Naive thymus-derived CD8-positive, alpha-beta T cell (primary cell): ENCODE measurements at regions of chr2 and their contacts with region 1.

Region 1: DNA sequence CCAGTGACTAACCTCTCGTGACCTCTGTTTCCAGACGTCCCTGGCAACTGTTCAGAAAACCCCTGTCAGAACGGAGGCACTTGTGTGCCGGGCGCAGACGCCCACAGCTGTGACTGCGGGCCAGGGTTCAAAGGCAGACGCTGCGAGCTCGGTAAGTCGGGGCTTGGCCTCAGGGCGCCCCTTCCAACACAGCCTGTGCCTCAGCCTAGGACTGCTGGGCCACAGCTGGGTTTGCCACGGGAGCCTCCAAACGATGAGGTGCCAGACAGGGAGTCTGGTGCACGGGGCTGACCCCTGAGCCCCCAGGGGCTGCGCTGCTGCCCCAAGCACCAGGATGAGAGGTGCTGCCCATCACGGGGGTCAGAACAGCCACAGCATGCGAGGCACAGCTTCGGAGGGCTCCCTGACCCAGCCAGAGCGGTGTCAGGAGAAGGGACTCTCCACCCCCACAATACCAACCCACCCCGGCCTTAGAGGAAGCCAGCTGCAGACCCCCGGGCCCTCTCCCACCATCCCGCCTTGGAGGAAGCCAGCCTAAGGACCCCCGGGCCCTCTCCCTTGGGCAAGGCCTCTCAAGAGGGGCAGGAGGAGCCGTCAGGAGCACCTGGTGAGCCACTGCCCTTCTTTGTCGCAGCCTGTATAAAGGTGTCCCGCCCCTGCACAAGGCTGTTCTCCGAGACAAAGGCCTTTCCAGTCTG is 20.3 kb downstream of the MTERF4 start:
- DNase-seq: no peak
- ATAC-seq: no peak
- H3K4me3 Mint-ChIP-seq: no peak overlapping the region
- H3K27ac Mint-ChIP-seq: peak overlapping the region in 8 of 10 donors; percentile 32 to 94 (median 82)
- H3K4me1 Mint-ChIP-seq: peaks cover 8 to 36% (median 24%) of the 10 kb centered on the region in 4 donors
- H3K27me3 Mint-ChIP-seq: no peaks in the 10 kb centered on the region

Region 2: GRCh38 chr2:240946654-240947053 is 135.1 kb before region 1 on chr2:
- POLR2A ChIA-PET with region 1: no interaction called
- DNase-seq: peak in 2 of 10 donors; percentile 13 to 19
- ATAC-seq: no peak
- H3K4me3 Mint-ChIP-seq: no peak overlapping the region
- H3K27ac Mint-ChIP-seq: peak overlapping the region in 1 of 10 donors; percentile 35
- H3K4me1 Mint-ChIP-seq: no peaks in the 10 kb centered on the region
- H3K27me3 Mint-ChIP-seq: peaks cover 0 to 6% (median 2%) of the 10 kb centered on the region in 5 donors

Region 3: GRCh38 chr2:241041589-241042158 is 40.1 kb before region 1 on chr2:
- POLR2A ChIA-PET with region 1: no interaction called
- DNase-seq: peak in 1 of 10 donors; percentile 18
- ATAC-seq: peak; percentile 29 to 32
- H3K4me3 Mint-ChIP-seq: peak overlapping the region in 2 of 10 donors; percentile 16 to 37
- H3K27ac Mint-ChIP-seq: peak overlapping the region in 9 of 10 donors; percentile 53 to 88 (median 66)
- H3K4me1 Mint-ChIP-seq: peaks cover 5 to 38% (median 19%) of the 10 kb centered on the region in 4 donors
- H3K27me3 Mint-ChIP-seq: no peaks in the 10 kb centered on the region

Region 4: GRCh38 chr2:241096979-241097378 is 15.2 kb after region 1 on chr2:
- POLR2A ChIA-PET with region 1: interaction called, 473 read pairs
- DNase-seq: no peak
- ATAC-seq: no peak
- H3K4me3 Mint-ChIP-seq: peak overlapping the region in 7 of 10 donors; percentile 30 to 97 (median 68)
- H3K27ac Mint-ChIP-seq: peak overlapping the region; percentile 79 to 99 (median 94)
- H3K4me1 Mint-ChIP-seq: peaks cover 33 to 79% (median 72%) of the 10 kb centered on the region in 4 donors
- H3K27me3 Mint-ChIP-seq: no peaks in the 10 kb centered on the region

Region 5: DNA sequence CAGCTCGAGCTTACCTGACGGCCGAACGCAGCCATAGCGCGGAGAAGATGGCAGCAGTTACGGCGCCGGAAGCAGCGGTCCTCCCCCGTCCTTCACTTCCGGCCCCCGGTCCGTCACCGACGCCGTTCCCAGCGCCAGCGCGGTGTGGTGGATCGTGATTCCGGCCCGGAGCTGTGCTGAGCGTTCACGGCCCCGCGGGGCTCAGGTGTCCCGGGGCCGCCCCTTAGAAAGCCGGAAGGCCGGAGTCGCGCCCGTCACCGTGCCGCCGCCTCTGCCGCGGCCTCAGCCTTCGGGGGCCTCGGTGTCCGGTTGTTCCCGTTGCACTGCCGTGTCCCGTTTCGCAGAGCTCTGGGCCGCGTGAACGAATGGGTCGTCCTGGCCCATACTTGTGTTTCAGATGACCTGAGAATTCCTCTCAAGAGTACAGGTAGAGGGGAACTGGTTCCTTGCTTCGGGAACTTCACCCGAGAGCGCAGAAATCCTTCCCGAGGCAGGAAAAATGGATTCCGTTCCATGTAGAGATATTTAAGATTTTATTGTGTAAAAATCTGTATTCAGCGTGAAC is 20.5 kb after region 1 on chr2 and contains the start of gene MTERF4:
- POLR2A ChIA-PET with region 1: interaction called, 473 read pairs
- DNase-seq: peak; percentile 79 to 90 (median 85)
- ATAC-seq: peak; percentile 91 to 94
- H3K4me3 Mint-ChIP-seq: peak within 1 kb of the TSS; percentile 94 to 99 (median 97)
- H3K27ac Mint-ChIP-seq: peak within 1 kb of the TSS; percentile 92 to 99 (median 98)
- H3K4me1 Mint-ChIP-seq: peaks cover 20 to 75% (median 69%) of the 10 kb centered on the region in 4 donors
- H3K27me3 Mint-ChIP-seq: no peaks in the 10 kb centered on the region
- polyA plus RNA-seq, gene MTERF4: 46.4 to 82.1 (median 57.8) TPM

Region 6: DNA sequence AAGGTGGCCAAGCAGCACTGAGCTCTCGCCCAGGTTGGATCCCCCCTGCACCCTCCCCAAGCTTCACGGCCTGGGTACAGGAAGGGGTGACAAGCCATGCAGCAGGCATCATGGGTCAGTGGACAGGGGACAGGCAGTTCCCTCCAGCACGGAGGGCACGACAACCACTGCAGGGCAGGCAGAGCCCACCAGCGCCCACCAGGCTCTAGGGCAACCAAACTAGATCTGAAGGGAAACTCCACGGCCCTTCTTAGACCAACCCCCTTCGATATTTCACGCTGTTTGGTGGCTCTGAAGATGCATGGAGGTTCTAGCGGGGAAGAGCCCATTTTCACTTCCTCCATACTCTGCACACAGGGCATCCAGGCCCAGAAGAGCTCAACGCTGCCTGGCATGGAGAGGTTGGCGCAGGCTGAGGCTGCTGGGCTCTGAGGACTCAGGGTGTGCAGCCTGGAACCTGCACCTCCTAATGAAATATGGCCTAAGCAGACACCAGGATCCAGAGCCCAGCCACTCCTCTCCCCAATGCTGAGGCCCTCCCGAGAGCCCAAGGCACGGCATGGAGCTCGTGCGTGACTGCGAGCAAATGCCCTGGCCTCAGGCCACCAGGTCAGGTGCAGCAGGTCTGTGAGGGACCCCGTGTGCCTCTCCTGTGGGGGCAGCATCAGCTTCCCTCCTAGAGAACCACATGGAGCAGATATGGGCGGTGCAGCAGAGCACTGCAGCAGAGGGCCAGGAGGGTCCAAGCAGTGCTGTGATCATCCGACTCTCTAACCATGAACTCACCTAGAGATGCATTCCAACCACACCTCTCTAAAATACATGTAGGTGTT is 29.0 kb after region 1 on chr2:
- POLR2A ChIA-PET with region 1: interaction called, 473 read pairs
- DNase-seq: peak in 1 of 10 donors; percentile 30
- ATAC-seq: peak; percentile 19 to 28
- H3K4me3 Mint-ChIP-seq: peak overlapping the region; percentile 85 to 99 (median 94)
- H3K27ac Mint-ChIP-seq: peak overlapping the region; percentile 92 to 99 (median 98)
- H3K4me1 Mint-ChIP-seq: peaks cover 25 to 64% (median 58%) of the 10 kb centered on the region in 4 donors
- H3K27me3 Mint-ChIP-seq: no peaks in the 10 kb centered on the region

Region 7: GRCh38 chr2:241179899-241180298 is 98.1 kb after region 1 on chr2:
- POLR2A ChIA-PET with region 1: no interaction called
- DNase-seq: no peak
- ATAC-seq: no peak
- H3K4me3 Mint-ChIP-seq: no peak overlapping the region
- H3K27ac Mint-ChIP-seq: peak overlapping the region in 1 of 10 donors; percentile 19
- H3K4me1 Mint-ChIP-seq: no peaks in the 10 kb centered on the region
- H3K27me3 Mint-ChIP-seq: no peaks in the 10 kb centered on the region

Region 8: DNA sequence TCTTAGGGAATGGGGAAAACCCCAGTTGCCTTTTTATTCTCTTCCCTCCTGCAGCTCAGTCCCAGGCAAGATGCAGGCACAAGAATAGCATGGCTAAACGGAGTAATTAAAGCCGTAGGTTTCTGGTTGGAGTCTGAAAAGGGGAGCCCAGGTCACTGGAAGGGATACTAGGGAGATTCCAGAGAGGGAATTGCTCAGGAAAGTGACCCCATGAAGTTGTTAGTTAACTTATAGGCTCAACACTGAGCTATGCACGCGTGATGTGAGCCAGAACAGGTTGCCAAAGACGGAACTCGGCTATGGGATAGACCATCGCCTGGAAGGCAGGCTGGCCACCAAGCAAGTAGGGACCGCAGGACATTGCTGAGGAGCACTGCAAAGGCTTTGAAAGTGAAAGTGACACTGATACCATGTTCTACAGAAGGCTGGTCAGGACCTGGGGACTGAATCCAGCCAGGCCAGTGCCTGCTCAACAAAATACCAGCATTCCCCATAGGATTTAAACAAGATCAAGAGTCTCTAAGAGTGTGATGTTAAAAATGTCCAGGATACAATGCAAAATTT is 281.6 kb after region 1 on chr2:
- POLR2A ChIA-PET with region 1: no interaction called
- DNase-seq: no peak
- ATAC-seq: no peak
- H3K4me3 Mint-ChIP-seq: no peak overlapping the region
- H3K27ac Mint-ChIP-seq: peak overlapping the region in 1 of 10 donors; percentile 57
- H3K4me1 Mint-ChIP-seq: peaks cover 6 to 37% (median 16%) of the 10 kb centered on the region in 4 donors
- H3K27me3 Mint-ChIP-seq: no peaks in the 10 kb centered on the region